Dendritic cell treated with granulocyte-macrophage colony-stimulating factor and Interleukin-4, amounts not matched to agents 40 ng/mL and 50 ng/mL, for 4 days (primary cell): ENCODE measurements at regions of chr21 and their contacts with region 1.

Region 1: GRCh38 chr21:42009831-42010523 is at the start of gene ZBTB21:
- H3K4me3 Mint-ChIP-seq: peak within 1 kb of the TSS; percentile 82
- H3K27ac Mint-ChIP-seq: peak within 1 kb of the TSS; percentile 94
- H3K4me1 Mint-ChIP-seq: peaks cover 28% of the 10 kb centered on the region
- H3K27me3 Mint-ChIP-seq: peaks cover 22% of the 10 kb centered on the region

Region 2: DNA sequence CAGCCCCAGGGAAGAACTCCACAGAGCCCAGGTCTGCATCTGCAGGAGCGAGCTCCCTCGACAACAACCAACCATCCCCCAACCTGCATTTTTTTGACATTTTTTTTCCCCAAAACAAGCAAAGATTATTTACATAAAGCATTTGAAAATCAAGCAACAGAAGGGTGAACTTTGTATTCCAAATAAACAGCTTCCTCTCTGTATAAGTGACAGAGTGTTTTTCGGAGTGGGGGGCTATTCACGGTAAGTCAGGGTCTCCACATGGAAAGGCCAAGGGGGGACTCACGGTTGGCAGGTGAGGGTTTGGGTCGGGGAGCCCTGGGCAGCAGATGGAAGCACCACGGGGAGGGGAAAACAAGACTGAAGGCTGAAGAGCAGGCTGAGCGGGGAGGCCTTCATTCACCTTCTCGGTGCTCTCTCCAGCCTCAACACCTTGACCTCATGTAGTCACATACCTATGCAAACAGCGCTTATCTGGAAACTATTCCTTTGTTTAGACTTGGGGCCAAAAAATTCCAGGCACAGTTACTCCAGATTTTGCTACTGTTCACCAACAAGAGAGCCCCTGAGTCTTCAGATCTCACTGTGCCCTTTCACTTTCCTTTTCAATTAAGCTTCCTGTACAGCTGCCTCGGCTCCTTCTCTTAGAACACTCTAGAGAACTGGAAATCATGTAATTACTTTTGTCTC is 83.7 kb before region 1 on chr21:
- intact Hi-C with region 1: loop called (anchors 5 kb)
- H3K4me3 Mint-ChIP-seq: peak overlapping the region; percentile 81
- H3K27ac Mint-ChIP-seq: peak overlapping the region; percentile 96
- H3K4me1 Mint-ChIP-seq: peaks cover 93% of the 10 kb centered on the region
- H3K27me3 Mint-ChIP-seq: peaks cover 2% of the 10 kb centered on the region

Region 3: DNA sequence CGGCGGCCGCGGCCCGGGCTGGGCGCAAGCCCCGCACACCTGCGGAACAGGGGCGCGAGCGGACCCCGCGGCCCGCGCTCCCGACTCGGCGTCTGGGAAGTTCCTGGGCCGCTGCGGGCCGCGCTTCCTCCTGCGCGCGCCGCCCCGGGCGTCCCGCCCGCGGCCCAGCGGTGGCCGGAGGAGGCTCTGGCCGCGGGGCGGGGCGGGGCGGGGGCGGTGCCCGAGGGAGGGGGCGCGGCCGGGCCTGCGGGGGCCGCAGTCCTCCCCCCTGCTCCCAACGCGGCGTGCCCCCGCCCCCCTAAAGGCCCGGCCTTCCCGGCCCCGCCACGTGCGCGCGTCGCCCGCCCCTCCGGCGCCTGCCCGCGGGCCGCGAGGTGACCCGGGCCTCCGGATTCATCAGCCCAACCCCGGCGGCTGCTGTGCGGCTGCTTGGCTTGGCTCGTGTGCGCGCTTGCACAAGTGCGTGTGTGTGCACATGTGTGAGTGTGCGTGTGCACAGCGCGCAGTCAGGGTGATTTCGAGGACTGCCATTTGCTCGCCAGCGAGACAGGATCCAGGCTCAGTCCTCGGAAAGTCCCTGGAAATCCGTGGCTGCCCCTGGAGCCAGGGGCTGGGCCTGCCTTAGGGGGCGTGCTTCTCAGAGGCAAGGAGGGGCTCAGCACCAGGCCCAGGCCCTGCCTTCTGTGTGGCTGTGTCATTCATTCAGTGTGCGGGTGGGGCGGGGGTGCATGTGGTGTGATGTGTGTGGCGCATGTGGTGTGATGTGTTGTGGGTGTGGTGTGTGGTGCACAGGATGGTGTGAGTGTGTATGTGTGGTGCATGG is 55.9 kb before region 1 on chr21 and contains the start of gene C2CD2:
- intact Hi-C with region 1: loop called (anchors 2 kb)
- H3K4me3 Mint-ChIP-seq: peak within 1 kb of the TSS; percentile 79
- H3K27ac Mint-ChIP-seq: peak within 1 kb of the TSS; percentile 73
- H3K4me1 Mint-ChIP-seq: peaks cover 55% of the 10 kb centered on the region
- H3K27me3 Mint-ChIP-seq: peaks cover 5% of the 10 kb centered on the region

Region 4: DNA sequence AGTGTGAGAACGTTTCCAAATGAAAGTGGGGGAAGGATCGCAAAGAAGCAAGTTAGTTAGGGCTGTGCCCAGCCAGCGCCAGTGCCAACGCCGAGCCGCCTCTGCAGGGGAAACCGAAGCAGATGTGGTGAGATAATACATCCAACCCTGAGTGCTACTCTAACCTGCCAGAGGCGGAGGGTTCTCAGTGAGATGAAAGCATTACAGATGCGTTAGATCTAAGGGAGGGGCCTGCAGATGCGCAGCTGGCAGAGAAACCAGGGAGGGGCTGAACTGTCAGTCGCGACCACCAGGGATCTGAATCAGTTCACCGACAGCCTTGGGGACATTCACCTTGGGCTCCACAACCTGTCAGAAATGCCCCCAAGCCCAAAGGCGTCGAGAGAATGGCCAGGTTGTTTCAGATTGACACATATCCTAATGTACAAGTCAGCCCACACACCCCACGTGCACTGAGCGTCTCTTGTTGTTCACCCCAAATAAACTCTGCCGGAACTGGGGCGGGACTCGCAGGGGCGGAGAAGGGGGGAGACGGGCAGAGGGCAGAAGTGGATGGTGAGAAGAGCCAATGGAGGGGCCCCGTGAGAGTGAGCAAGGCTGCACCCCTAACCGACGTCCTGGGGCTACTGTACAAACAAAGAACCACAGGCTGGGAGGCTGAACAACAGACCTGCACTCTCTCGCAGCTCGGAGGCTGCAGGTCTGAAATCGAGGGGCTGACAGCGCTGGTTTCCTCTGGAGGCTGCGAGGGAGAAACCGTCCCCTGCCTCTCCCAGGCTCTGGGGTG is 52.5 kb after region 1 on chr21:
- intact Hi-C with region 1: loop called (anchors 5 kb)
- H3K4me3 Mint-ChIP-seq: peak overlapping the region; percentile 63
- H3K27ac Mint-ChIP-seq: peak overlapping the region; percentile 97
- H3K4me1 Mint-ChIP-seq: peaks cover 85% of the 10 kb centered on the region
- H3K27me3 Mint-ChIP-seq: no peaks in the 10 kb centered on the region

Region 5: GRCh38 chr21:42080788-42081083 is 70.8 kb after region 1 on chr21:
- intact Hi-C with region 1: loop called (anchors 5 kb)
- H3K4me3 Mint-ChIP-seq: no peak overlapping the region
- H3K27ac Mint-ChIP-seq: peak overlapping the region; percentile 87
- H3K4me1 Mint-ChIP-seq: peaks cover 51% of the 10 kb centered on the region
- H3K27me3 Mint-ChIP-seq: peaks cover 11% of the 10 kb centered on the region

Region 6: GRCh38 chr21:42117229-42117966 is 107.4 kb after region 1 on chr21:
- intact Hi-C with region 1: loop called (anchors 1 kb)
- H3K4me3 Mint-ChIP-seq: peak overlapping the region; percentile 49
- H3K27ac Mint-ChIP-seq: peak overlapping the region; percentile 1
- H3K4me1 Mint-ChIP-seq: peaks cover 57% of the 10 kb centered on the region
- H3K27me3 Mint-ChIP-seq: peaks cover 63% of the 10 kb centered on the region